ENCODE measurements at regions of chr4 and their contacts with region 1.

Region 1: DNA sequence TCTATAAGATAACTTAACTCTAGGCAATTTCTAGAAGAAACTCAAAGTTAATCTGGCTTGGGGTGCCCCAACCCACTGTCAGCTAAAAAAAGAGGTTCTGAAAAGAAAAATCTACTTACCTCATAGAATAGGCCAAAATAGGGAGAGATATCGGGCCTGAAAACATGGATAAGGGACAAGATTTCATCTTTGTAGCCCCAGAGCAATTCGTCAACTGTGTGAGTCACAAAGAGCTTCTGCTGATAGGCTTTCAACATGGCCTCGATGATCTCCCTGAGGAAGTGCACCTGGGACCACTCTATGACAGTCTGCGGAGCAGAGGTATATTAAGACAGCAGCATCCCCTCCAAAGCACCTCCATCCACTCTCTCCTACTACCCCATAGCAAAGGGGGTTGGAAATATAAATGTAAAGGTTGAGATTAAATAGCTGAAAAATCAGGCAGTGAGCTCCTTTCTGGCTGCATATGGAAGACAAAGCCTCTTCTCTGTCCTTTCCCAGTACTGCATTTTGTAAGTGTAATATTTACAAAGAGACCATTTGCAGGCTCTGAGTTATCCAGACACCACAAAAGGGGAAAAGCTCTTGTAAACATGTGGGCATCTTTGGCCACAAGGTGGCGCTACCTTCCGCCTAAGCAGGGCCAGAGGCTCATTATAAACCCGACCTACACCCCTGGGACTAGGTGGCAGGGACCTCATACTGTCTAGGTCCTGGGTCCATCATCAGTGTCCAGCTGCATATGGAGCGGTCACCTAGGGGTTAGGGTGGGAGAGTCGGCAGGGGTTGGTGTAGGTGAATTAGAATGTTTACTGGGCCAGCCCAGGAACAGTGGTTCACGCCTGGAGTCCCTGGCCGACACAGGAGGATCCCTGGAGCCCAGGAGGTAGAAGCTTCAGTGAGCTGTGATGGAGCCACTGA is 31.5 kb upstream of the NUP54 start:
- DNase-seq: peak; percentile 94
- ATAC-seq: peak; percentile 96
- H3K4me3 Mint-ChIP-seq: no peak overlapping the region
- H3K27ac Mint-ChIP-seq: no peak overlapping the region
- H3K4me1 Mint-ChIP-seq: no peaks in the 10 kb centered on the region
- H3K27me3 Mint-ChIP-seq: no peaks in the 10 kb centered on the region
- CTCF ChIP-seq: peak; percentile 93

Region 2: GRCh38 chr4:76168688-76169087 is 11.0 kb before region 1 on chr4:
- CTCF ChIA-PET with region 1: interaction called, 34 read pairs
- POLR2A ChIA-PET with region 1: no interaction called
- intact Hi-C with region 1: no loop called
- DNase-seq: no peak
- ATAC-seq: no peak
- H3K4me3 Mint-ChIP-seq: no peak overlapping the region
- H3K27ac Mint-ChIP-seq: no peak overlapping the region
- H3K4me1 Mint-ChIP-seq: no peaks in the 10 kb centered on the region
- H3K27me3 Mint-ChIP-seq: no peaks in the 10 kb centered on the region
- CTCF ChIP-seq: no peak

Region 3: GRCh38 chr4:76208005-76208765 is 28.5 kb after region 1 on chr4:
- CTCF ChIA-PET with region 1: interaction called, 33 read pairs
- POLR2A ChIA-PET with region 1: no interaction called
- intact Hi-C with region 1: no loop called
- DNase-seq: no peak
- ATAC-seq: no peak
- H3K4me3 Mint-ChIP-seq: no peak overlapping the region
- H3K27ac Mint-ChIP-seq: no peak overlapping the region
- H3K4me1 Mint-ChIP-seq: peaks cover 39% of the 10 kb centered on the region
- H3K27me3 Mint-ChIP-seq: no peaks in the 10 kb centered on the region
- CTCF ChIP-seq: no peak

Region 4: GRCh38 chr4:76226418-76226817 is 46.8 kb after region 1 on chr4:
- CTCF ChIA-PET with region 1: interaction called, 18 read pairs
- POLR2A ChIA-PET with region 1: no interaction called
- intact Hi-C with region 1: no loop called
- DNase-seq: no peak
- ATAC-seq: no peak
- H3K4me3 Mint-ChIP-seq: no peak overlapping the region
- H3K27ac Mint-ChIP-seq: no peak overlapping the region
- H3K4me1 Mint-ChIP-seq: no peaks in the 10 kb centered on the region
- H3K27me3 Mint-ChIP-seq: peaks cover 7% of the 10 kb centered on the region
- CTCF ChIP-seq: no peak

Region 5: DNA sequence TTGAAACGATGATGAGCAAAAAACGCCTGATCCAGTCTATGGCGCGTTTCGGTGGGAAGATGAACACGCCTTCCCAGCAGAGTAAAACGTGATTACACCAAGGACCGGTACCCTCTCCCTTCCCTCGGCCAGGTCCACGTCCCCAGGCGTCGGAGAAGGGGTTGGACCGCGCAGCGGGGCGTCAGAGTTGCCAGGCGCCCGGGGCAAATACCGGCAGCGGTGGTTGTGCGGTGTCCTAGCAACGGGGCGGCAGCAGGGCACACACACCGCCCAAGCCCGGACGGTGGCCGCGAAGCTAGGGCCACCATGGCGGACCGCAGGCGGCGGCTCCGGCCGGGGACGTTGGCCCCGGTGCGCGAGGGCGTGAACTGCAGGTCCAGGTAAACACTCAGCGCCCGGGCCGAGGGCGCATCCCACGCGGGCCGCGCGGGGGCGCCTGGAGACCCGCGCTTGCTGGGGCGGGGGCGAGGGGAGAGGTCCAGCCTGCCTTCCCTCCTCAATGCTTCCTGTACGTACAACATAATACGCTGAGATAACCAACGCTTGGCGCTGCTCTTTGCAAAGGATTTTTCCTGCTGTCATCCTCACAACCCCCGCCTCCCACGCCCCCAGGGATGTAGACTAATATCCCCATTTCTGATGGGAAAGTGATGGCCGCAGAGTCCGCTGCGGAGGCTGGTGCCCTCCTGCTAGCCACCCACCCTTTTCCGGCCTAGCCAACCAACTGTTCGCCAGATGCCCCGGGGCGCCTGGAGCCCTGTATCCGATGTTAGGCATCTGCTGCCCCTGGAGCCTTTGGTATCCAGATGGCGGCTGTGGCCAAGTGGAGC is 72.0 kb after region 1 on chr4 and contains the start of gene FAM47E:
- CTCF ChIA-PET with region 1: interaction called, 29 read pairs
- POLR2A ChIA-PET with region 1: no interaction called
- intact Hi-C with region 1: no loop called
- DNase-seq: peak; percentile 57
- ATAC-seq: peak; percentile 86
- H3K4me3 Mint-ChIP-seq: peak within 1 kb of the TSS; percentile 73
- H3K27ac Mint-ChIP-seq: no peak within 1 kb of the TSS
- H3K4me1 Mint-ChIP-seq: peaks cover 6% of the 10 kb centered on the region
- H3K27me3 Mint-ChIP-seq: peaks cover 59% of the 10 kb centered on the region
- CTCF ChIP-seq: peak; percentile 49
- total RNA-seq, gene FAM47E: not detected

Region 6: DNA sequence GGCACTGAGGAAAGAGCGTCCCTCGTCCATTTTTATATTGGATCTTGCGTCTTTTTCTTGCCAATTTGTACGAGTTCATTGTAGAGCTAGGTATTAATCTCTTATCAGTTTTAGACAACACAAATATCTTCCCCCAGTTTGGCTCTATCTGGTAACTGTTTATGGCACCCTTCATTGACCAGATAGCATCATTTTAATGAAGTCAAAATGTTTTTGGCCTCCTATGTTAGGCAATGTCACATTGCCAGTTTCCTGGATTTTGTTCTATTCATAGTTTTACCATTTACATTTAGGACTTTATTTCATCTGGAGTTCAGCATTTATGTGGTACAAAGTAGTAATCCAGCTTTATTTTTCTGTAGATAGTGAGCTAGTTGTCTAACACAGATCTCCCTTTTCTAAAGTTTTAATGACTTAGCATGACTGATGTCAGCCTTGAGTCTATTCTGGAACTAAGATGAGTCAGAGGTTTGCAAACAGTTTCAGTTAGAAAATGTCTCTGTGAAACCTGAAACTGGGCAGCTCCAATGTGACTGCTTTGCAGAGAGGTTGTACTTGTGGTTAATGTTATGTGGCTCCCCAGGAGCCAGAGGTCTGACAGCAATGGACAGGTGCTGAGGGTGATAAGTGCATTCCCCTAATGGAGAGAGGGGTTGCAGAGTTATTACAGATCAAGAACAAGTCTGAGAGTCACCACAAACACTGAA is 121.6 kb after region 1 on chr4:
- CTCF ChIA-PET with region 1: interaction called, 27 read pairs
- POLR2A ChIA-PET with region 1: no interaction called
- intact Hi-C with region 1: no loop called
- DNase-seq: peak; percentile 60
- ATAC-seq: peak; percentile 82
- H3K4me3 Mint-ChIP-seq: no peak overlapping the region
- H3K27ac Mint-ChIP-seq: no peak overlapping the region
- H3K4me1 Mint-ChIP-seq: peaks cover 36% of the 10 kb centered on the region
- H3K27me3 Mint-ChIP-seq: peaks cover 12% of the 10 kb centered on the region
- CTCF ChIP-seq: no peak

Region 7: GRCh38 chr4:76377911-76378310 is 198.3 kb after region 1 on chr4:
- CTCF ChIA-PET with region 1: interaction called, 141 read pairs
- POLR2A ChIA-PET with region 1: no interaction called
- intact Hi-C with region 1: loop called (anchors 2 kb)
- DNase-seq: peak; percentile 61
- ATAC-seq: peak; percentile 34
- H3K4me3 Mint-ChIP-seq: no peak overlapping the region
- H3K27ac Mint-ChIP-seq: no peak overlapping the region
- H3K4me1 Mint-ChIP-seq: no peaks in the 10 kb centered on the region
- H3K27me3 Mint-ChIP-seq: peaks cover 2% of the 10 kb centered on the region
- CTCF ChIP-seq: peak; percentile 69

Measured in activated CD8-positive, alpha-beta T cell treated with anti-CD3 and anti-CD28 coated beads for 36 hours (primary cell).